IMR-90 (cell line): ENCODE measurements at regions of chr12 and their contacts with region 1.

Region 1: GRCh38 chr12:89709157-89709994 is 738 bp upstream of the ATP2B1 start:
- DNase-seq: peak; percentile 99
- ATAC-seq: peak; percentile 84
- H3K4me3 ChIP-seq: peak overlapping the region; percentile 86
- H3K27ac ChIP-seq: peak overlapping the region; percentile 87
- H3K4me1 ChIP-seq: no peaks in the 10 kb centered on the region
- H3K27me3 ChIP-seq: no peaks in the 10 kb centered on the region
- CTCF ChIP-seq: 0 out of 2 replicates have a peak, but pooled peaks have one; percentile 15
- POLR2A ChIP-seq: peak; percentile 95
- RAD21 ChIP-seq: peak; percentile 28; the same call in 1 of the 2 replicates

Region 2: DNA sequence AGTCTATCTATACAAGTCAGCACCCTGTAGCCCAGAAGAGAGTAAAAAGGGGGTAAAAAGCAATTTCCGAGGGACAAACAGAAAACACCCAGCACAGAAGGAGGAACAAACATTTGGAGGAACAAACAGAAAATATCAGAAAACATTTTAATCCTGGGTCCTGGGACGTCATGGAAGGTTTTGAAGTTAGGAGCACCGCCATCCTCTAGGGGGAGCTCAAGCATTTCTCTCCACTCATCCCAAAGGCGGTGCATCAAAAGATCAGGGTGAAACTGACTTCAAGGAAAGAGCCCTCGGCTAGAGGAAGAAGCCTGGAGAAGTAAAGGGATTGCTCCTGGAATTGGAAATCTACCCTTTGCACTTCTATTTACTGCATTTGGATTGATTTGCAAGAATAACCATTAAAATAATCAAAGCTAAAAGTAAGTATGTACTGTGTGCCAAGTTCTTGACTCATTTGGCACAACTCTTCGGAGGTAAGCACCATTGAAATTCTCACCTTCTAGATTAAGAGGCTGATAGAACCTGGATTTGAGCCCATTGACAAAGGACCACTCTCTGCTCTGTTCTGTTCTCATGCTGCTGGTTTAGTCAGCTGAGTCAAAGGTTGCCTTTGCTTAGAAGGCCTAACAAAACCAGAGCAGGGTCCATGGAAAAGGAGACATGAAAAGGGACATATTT is 166.3 kb before region 1 on chr12:
- CTCF ChIA-PET with region 1: interaction called, 5 read pairs
- POLR2A ChIA-PET with region 1: no interaction called
- dilution Hi-C with region 1: no loop called
- in situ Hi-C with region 1: loop called (anchors 10 kb)
- intact Hi-C with region 1: loop called (anchors 1 kb)
- DNase-seq: peak; percentile 83
- ATAC-seq: peak; percentile 94
- H3K4me3 ChIP-seq: no peak overlapping the region
- H3K27ac ChIP-seq: no peak overlapping the region
- H3K4me1 ChIP-seq: no peaks in the 10 kb centered on the region
- H3K27me3 ChIP-seq: no peaks in the 10 kb centered on the region
- CTCF ChIP-seq: peak; percentile 96
- POLR2A ChIP-seq: no peak
- RAD21 ChIP-seq: peak; percentile 97

Region 3: GRCh38 chr12:89947437-89948270 is 238.3 kb after region 1 on chr12:
- CTCF ChIA-PET with region 1: no interaction called
- POLR2A ChIA-PET with region 1: no interaction called
- dilution Hi-C with region 1: no loop called
- in situ Hi-C with region 1: no loop called
- intact Hi-C with region 1: loop called (anchors 1 kb)
- DNase-seq: peak; percentile 95
- ATAC-seq: peak; percentile 80
- H3K4me3 ChIP-seq: peak overlapping the region; percentile 13; the same call in 1 of the 2 replicates
- H3K27ac ChIP-seq: peak overlapping the region; percentile 82
- H3K4me1 ChIP-seq: peaks cover 23% of the 10 kb centered on the region
- H3K27me3 ChIP-seq: no peaks in the 10 kb centered on the region
- CTCF ChIP-seq: no peak
- POLR2A ChIP-seq: 0 out of 2 replicates have a peak, but pooled peaks have one; percentile 39
- RAD21 ChIP-seq: peak; percentile 0; the same call in 1 of the 2 replicates

Region 4: GRCh38 chr12:90102957-90103652 is 393.7 kb after region 1 on chr12:
- CTCF ChIA-PET with region 1: interaction called, 4 read pairs
- POLR2A ChIA-PET with region 1: no interaction called
- dilution Hi-C with region 1: no loop called
- in situ Hi-C with region 1: no loop called
- intact Hi-C with region 1: loop called (anchors 2 kb)
- DNase-seq: peak; percentile 53
- ATAC-seq: peak; percentile 79
- H3K4me3 ChIP-seq: no peak overlapping the region
- H3K27ac ChIP-seq: no peak overlapping the region
- H3K4me1 ChIP-seq: peaks cover 3% of the 10 kb centered on the region
- H3K27me3 ChIP-seq: no peaks in the 10 kb centered on the region
- CTCF ChIP-seq: peak; percentile 64
- POLR2A ChIP-seq: no peak
- RAD21 ChIP-seq: peak; percentile 69

Region 5: GRCh38 chr12:90627180-90627896 is 918.0 kb after region 1 on chr12:
- CTCF ChIA-PET with region 1: no interaction called
- POLR2A ChIA-PET with region 1: no interaction called
- dilution Hi-C with region 1: no loop called
- in situ Hi-C with region 1: no loop called
- intact Hi-C with region 1: loop called (anchors 10 kb)
- DNase-seq: peak; percentile 48
- ATAC-seq: no peak
- H3K4me3 ChIP-seq: no peak overlapping the region
- H3K27ac ChIP-seq: no peak overlapping the region
- H3K4me1 ChIP-seq: peaks cover 4% of the 10 kb centered on the region
- H3K27me3 ChIP-seq: no peaks in the 10 kb centered on the region
- CTCF ChIP-seq: no peak
- POLR2A ChIP-seq: no peak
- RAD21 ChIP-seq: no peak

Region 6: GRCh38 chr12:90940872-90941499 is 1231.6 kb after region 1 on chr12:
- CTCF ChIA-PET with region 1: no interaction called
- POLR2A ChIA-PET with region 1: no interaction called
- dilution Hi-C with region 1: no loop called
- in situ Hi-C with region 1: no loop called
- intact Hi-C with region 1: loop called (anchors 2 kb)
- DNase-seq: peak; percentile 76
- ATAC-seq: peak; percentile 84
- H3K4me3 ChIP-seq: no peak overlapping the region
- H3K27ac ChIP-seq: no peak overlapping the region
- H3K4me1 ChIP-seq: peaks cover 4% of the 10 kb centered on the region; the same call in 1 of the 2 replicates
- H3K27me3 ChIP-seq: no peaks in the 10 kb centered on the region
- CTCF ChIP-seq: peak; percentile 83
- POLR2A ChIP-seq: no peak
- RAD21 ChIP-seq: peak; percentile 82